Sigmoid colon (tissue), 7 donors: ENCODE measurements at regions of chr17 and their contacts with region 1.

Region 1: GRCh38 chr17:14300575-14301278 is at the start of gene HS3ST3B1:
- DNase-seq: peak; percentile 97
- H3K4me3 ChIP-seq: peak within 1 kb of the TSS; percentile 35 to 56 (median 50)
- H3K27ac ChIP-seq: peak within 1 kb of the TSS; percentile 46 to 80 (median 66)
- H3K4me1 ChIP-seq: peaks cover 0 to 63% (median 58%) of the 10 kb centered on the region in 4 donors
- H3K27me3 ChIP-seq: peaks cover 76 to 100% (median 93%) of the 10 kb centered on the region in 3 donors
- CTCF ChIP-seq: no peak
- EP300 ChIP-seq: no peak
- POLR2A ChIP-seq: peak in 1 of 2 donors; percentile 39
- total RNA-seq, gene HS3ST3B1: 0.66 to 1.8 (median 1.1) TPM

Region 2: GRCh38 chr17:13024526-13025257 is 1276.0 kb before region 1 on chr17:
- intact Hi-C with region 1: loop called (anchors 10 kb)
- DNase-seq: no peak
- H3K4me3 ChIP-seq: peak overlapping the region in 1 of 4 donors; percentile 27
- H3K27ac ChIP-seq: no peak overlapping the region
- H3K4me1 ChIP-seq: peaks cover 0 to 6% (median 0%) of the 10 kb centered on the region in 4 donors
- H3K27me3 ChIP-seq: no peaks in the 10 kb centered on the region
- CTCF ChIP-seq: peak; percentile 23 to 95 (median 74)
- EP300 ChIP-seq: no peak
- POLR2A ChIP-seq: no peak

Region 3: DNA sequence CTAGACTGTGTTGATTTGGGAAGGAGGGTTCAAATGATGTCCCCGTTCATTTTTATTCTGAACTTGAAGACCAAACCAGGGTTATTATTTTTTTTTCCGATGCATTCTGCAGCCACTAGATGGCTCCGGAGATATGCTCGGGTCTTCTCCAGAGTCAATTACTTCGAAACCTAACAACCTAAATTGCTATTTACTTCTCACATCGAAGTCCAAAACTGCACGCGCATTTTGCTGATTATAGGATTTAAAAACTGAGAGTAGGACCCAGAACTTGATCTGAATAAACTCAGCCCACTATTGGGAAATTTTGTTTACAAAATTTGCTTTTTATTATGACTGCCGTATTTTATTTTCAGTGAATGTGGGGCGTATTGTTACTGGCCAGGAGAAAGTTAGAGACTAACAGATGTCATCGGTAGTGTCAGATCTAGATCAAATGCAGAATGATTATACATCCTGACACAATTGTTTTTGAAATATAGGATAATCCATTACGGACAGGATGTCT is 962.8 kb before region 1 on chr17:
- intact Hi-C with region 1: loop called (anchors 5 kb)
- DNase-seq: no peak
- H3K4me3 ChIP-seq: peak overlapping the region in 3 of 4 donors; percentile 18 to 29 (median 27)
- H3K27ac ChIP-seq: no peak overlapping the region
- H3K4me1 ChIP-seq: peaks cover 0 to 4% (median 0%) of the 10 kb centered on the region in 4 donors
- H3K27me3 ChIP-seq: peaks cover 0 to 14% (median 0%) of the 10 kb centered on the region in 3 donors
- CTCF ChIP-seq: peak in 3 of 4 experiments; percentile 39 to 55 (median 42)
- EP300 ChIP-seq: no peak
- POLR2A ChIP-seq: no peak

Region 4: GRCh38 chr17:13594762-13595598 is 705.7 kb before region 1 on chr17:
- intact Hi-C with region 1: loop called (anchors 2 kb)
- DNase-seq: peak; percentile 85
- H3K4me3 ChIP-seq: no peak overlapping the region
- H3K27ac ChIP-seq: peak overlapping the region in 1 of 4 donors; percentile 1
- H3K4me1 ChIP-seq: no peaks in the 10 kb centered on the region
- H3K27me3 ChIP-seq: peaks cover 0 to 41% (median 0%) of the 10 kb centered on the region in 3 donors
- CTCF ChIP-seq: peak; percentile 44 to 80 (median 74)
- EP300 ChIP-seq: no peak
- POLR2A ChIP-seq: no peak

Region 5: DNA sequence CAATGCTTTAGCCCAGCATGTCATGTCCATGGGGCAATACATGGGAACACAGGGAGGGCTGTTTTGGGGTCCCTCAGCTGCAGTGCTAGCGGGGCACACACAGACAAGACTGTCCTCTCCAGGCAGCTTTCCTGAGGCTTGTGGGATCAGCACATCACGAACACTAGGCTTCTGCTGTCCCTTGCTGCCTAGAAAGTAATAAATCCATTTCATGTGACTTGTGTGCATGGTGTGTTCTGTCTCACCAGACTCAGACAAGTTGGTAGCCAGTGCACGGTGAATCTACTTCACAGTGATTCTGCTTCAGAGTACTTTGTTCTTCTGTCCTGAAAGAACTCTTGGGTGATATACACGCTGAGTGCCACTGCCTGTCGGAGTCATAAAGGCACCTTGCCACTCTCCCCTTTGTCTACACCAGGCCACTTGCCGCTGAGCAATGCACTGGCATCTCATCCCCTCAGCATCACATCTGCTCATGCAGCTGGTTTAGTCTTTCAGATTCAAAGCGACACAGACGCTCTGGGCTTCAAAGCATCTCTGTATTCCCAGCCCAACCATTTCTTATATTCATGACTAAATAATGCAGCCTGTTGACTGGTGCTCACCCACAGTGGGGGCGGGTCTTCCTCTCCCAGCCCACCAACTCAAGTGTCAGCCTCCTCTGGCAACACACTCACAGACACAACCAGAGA is 326.6 kb before region 1 on chr17:
- intact Hi-C with region 1: no loop called
- DNase-seq: no peak
- H3K4me3 ChIP-seq: no peak overlapping the region
- H3K27ac ChIP-seq: no peak overlapping the region
- H3K4me1 ChIP-seq: no peaks in the 10 kb centered on the region
- H3K27me3 ChIP-seq: no peaks in the 10 kb centered on the region
- CTCF ChIP-seq: no peak
- EP300 ChIP-seq: no peak
- POLR2A ChIP-seq: no peak